ENCODE measurements at regions of chr3 and their contacts with region 1.

Region 1: GRCh38 chr3:174125267-174125824 is 727.8 kb downstream of the NLGN1 start:
- DNase-seq: peak in 1 of 5 donors; percentile 6
- ATAC-seq: peak in 3 of 4 donors; percentile 44 to 77 (median 50)
- H3K4me3 ChIP-seq: no peak overlapping the region
- H3K27ac ChIP-seq: no peak overlapping the region
- H3K4me1 ChIP-seq: no peaks in the 10 kb centered on the region
- H3K27me3 ChIP-seq: no peaks in the 10 kb centered on the region
- CTCF ChIP-seq: peak; percentile 19 to 58 (median 42)
- POLR2A ChIP-seq: no peak

Region 2: GRCh38 chr3:174062923-174063322 is 62.4 kb before region 1 on chr3:
- intact Hi-C with region 1: no loop called
- DNase-seq: no peak
- ATAC-seq: no peak
- H3K4me3 ChIP-seq: no peak overlapping the region
- H3K27ac ChIP-seq: no peak overlapping the region
- H3K4me1 ChIP-seq: no peaks in the 10 kb centered on the region
- H3K27me3 ChIP-seq: no peaks in the 10 kb centered on the region
- CTCF ChIP-seq: no peak
- POLR2A ChIP-seq: no peak

Region 3: GRCh38 chr3:174387736-174388135 is 262.4 kb after region 1 on chr3:
- intact Hi-C with region 1: loop called in 1 of 10 experiments (anchors 10 kb)
- DNase-seq: no peak
- ATAC-seq: no peak
- H3K4me3 ChIP-seq: no peak overlapping the region
- H3K27ac ChIP-seq: no peak overlapping the region
- H3K4me1 ChIP-seq: no peaks in the 10 kb centered on the region
- H3K27me3 ChIP-seq: no peaks in the 10 kb centered on the region
- CTCF ChIP-seq: no peak
- POLR2A ChIP-seq: no peak

Measured in heart left ventricle (tissue), 16 donors.